Naive thymus-derived CD4-positive, alpha-beta T cell (primary cell): ENCODE measurements at regions of chr5 and their contacts with region 1.

Region 1: DNA sequence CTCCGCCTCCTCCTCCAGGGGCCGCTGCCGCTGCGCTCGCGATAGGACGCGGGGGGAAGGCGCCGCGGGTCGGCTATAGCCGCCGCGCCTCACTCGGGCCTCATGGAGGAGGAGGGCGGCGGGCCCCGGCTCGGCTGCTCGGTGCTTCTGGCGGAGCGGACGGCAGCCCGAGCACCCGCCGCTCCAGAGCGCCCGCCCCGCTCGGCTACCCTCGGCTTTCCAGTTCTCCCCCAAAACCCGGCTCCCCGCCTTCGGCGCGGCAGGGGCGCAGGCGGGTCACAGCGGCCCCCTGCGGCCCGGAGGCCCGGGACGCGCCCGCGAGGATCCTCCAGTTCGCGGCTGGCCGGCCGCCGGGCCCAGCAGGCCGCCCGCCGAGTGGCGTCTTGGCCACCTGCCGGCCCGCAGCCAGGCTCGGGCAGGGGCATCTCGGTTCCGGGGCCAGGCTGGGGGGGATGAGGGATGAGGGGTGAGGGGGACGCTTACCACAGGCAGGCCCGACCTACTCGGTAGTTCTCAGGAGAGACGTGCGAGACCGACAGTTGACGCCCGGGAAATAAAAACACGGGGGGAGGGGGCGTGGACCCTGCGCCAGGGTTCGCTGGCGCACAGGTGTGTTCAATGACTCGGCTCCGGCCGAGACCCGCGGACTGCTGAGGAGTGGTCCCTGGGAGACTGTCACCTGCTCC is at the start of gene PAIP1:
- DNase-seq: peak; percentile 80 to 89 (median 87)
- ATAC-seq: peak; percentile 89
- H3K4me3 ChIP-seq: peak within 1 kb of the TSS; percentile 79
- H3K4me3 Mint-ChIP-seq: peak within 1 kb of the TSS in 7 of 10 donors; percentile 88 to 97 (median 95)
- H3K27ac ChIP-seq: peak within 1 kb of the TSS; percentile 96
- H3K27ac Mint-ChIP-seq: peak within 1 kb of the TSS; percentile 91 to 99 (median 98)
- H3K4me1 ChIP-seq: peaks cover 17 to 30% of the 10 kb centered on the region in 2 donors
- H3K4me1 Mint-ChIP-seq: peaks cover 6 to 17% (median 7%) of the 10 kb centered on the region in 7 donors
- H3K27me3 ChIP-seq: no peaks in the 10 kb centered on the region
- H3K27me3 Mint-ChIP-seq: peaks cover 0 to 18% (median 5%) of the 10 kb centered on the region in 5 donors
- total RNA-seq, gene PAIP1: 20.7 to 41.7 (median 39.2) TPM

Region 2: GRCh38 chr5:43396762-43397304 is 160.2 kb before region 1 on chr5:
- CTCF ChIA-PET with region 1: no interaction called
- POLR2A ChIA-PET with region 1: no interaction called
- intact Hi-C with region 1: loop called (anchors 2 to 5 kb)
- DNase-seq: peak; percentile 42 to 74 (median 66)
- ATAC-seq: peak; percentile 96
- H3K4me3 ChIP-seq: peak overlapping the region; percentile 80
- H3K4me3 Mint-ChIP-seq: peak overlapping the region; percentile 88 to 100 (median 98)
- H3K27ac ChIP-seq: peak overlapping the region; percentile 76
- H3K27ac Mint-ChIP-seq: peak overlapping the region; percentile 93 to 99 (median 97)
- H3K4me1 ChIP-seq: peaks cover 3 to 7% of the 10 kb centered on the region in 2 donors
- H3K4me1 Mint-ChIP-seq: peaks cover 15 to 62% (median 41%) of the 10 kb centered on the region in 7 donors
- H3K27me3 ChIP-seq: no peaks in the 10 kb centered on the region
- H3K27me3 Mint-ChIP-seq: no peaks in the 10 kb centered on the region

Region 3: GRCh38 chr5:43514816-43515677 is 42.0 kb before region 1 on chr5 and contains the start of gene C5orf34:
- CTCF ChIA-PET with region 1: no interaction called
- POLR2A ChIA-PET with region 1: interaction called, 6 read pairs
- intact Hi-C with region 1: loop called (anchors 1 kb)
- DNase-seq: peak; percentile 84 to 94 (median 89)
- ATAC-seq: peak; percentile 97
- H3K4me3 ChIP-seq: peak within 1 kb of the TSS; percentile 84
- H3K4me3 Mint-ChIP-seq: peak within 1 kb of the TSS; percentile 90 to 97 (median 94)
- H3K27ac ChIP-seq: peak within 1 kb of the TSS; percentile 81
- H3K27ac Mint-ChIP-seq: peak within 1 kb of the TSS; percentile 90 to 98 (median 95)
- H3K4me1 ChIP-seq: peaks cover 8 to 14% of the 10 kb centered on the region in 2 donors
- H3K4me1 Mint-ChIP-seq: peaks cover 17 to 42% (median 36%) of the 10 kb centered on the region in 7 donors
- H3K27me3 ChIP-seq: no peaks in the 10 kb centered on the region
- H3K27me3 Mint-ChIP-seq: no peaks in the 10 kb centered on the region
- total RNA-seq, gene C5orf34: 1.1 to 5.2 (median 3.3) TPM

Region 4: DNA sequence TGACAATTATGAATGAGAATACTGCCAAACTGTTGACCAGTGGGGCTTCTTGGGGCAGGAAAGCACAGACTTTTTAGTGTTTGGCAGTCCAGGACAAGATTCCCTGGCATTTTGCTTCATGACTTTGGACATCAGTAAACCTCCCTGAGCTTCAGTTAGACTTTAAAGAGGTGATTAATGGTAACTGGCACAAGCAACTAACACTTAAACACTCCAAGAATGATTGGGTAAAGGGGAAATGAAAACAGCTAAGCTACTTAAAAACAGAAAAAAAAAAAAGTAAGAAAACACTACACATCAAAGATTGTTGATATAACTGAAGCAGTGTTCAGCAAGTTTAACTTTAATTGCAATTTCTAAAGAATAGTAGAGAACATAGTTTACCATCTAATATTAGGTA is 13.6 kb before region 1 on chr5:
- CTCF ChIA-PET with region 1: interaction called, 3 read pairs
- POLR2A ChIA-PET with region 1: interaction called, 5 read pairs
- intact Hi-C with region 1: loop called in 1 of 2 experiments (anchors 1 kb)
- DNase-seq: no peak
- ATAC-seq: no peak
- H3K4me3 ChIP-seq: no peak overlapping the region
- H3K4me3 Mint-ChIP-seq: no peak overlapping the region
- H3K27ac ChIP-seq: no peak overlapping the region
- H3K27ac Mint-ChIP-seq: peak overlapping the region in 2 of 9 donors; percentile 17 to 34
- H3K4me1 ChIP-seq: no peaks in the 10 kb centered on the region
- H3K4me1 Mint-ChIP-seq: peaks cover 7 to 32% (median 16%) of the 10 kb centered on the region in 7 donors
- H3K27me3 ChIP-seq: no peaks in the 10 kb centered on the region
- H3K27me3 Mint-ChIP-seq: no peaks in the 10 kb centered on the region

Region 5: DNA sequence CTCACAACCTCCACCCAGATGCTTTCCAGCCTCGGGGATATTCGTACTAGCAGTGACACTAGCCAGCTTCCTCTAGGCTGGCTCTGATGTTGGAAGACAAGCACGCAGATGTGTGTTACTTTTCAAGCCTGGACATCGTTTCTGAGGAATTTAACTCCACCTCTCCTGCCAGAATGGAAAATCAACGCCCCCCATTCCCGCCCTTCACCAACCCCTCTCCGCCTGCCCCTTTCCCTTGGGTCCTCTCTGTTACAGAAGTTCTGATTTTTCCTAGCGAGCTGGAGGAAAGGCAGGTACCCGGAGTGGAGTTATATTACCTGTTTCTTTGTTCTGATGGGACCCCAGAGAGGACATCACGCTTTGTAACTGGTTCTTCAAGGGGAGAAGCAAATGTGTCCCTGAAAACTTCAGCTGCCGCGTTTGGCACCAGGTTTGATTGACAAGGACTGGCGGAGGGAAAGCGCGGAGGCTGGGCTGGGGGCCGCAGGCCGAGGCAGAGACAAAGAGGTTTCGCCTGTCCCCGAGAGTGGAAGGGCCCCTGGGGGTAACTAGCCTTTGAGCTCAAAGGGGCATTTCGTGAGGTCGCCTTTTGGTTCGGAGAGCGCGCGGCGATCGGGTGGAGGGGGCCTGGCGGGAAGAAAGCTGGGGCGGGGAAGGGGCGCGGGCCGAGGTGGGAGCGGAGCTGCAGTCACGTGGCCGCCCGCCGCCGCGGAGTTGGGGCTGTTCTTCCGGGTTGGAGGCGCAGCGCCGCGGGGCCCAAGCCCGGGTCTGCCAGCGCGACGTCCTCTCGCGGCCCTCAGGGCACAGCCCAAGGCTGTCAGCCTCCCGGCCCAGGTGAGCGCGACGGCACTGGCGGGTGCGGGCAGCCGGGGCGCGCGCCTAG is 45.7 kb after region 1 on chr5 and contains the start of gene NNT:
- CTCF ChIA-PET with region 1: interaction called, 4 read pairs
- POLR2A ChIA-PET with region 1: interaction called, 30 read pairs
- intact Hi-C with region 1: loop called (anchors 1 kb)
- DNase-seq: peak; percentile 71 to 85 (median 78)
- ATAC-seq: peak; percentile 85
- H3K4me3 ChIP-seq: peak within 1 kb of the TSS; percentile 78
- H3K4me3 Mint-ChIP-seq: peak within 1 kb of the TSS; percentile 90 to 99 (median 94)
- H3K27ac ChIP-seq: peak within 1 kb of the TSS; percentile 87
- H3K27ac Mint-ChIP-seq: peak within 1 kb of the TSS; percentile 86 to 98 (median 93)
- H3K4me1 ChIP-seq: peaks cover 6 to 14% of the 10 kb centered on the region in 2 donors
- H3K4me1 Mint-ChIP-seq: peaks cover 26 to 72% (median 60%) of the 10 kb centered on the region in 7 donors
- H3K27me3 ChIP-seq: no peaks in the 10 kb centered on the region
- H3K27me3 Mint-ChIP-seq: no peaks in the 10 kb centered on the region
- total RNA-seq, gene NNT: 42.5 to 73.5 (median 60.7) TPM

Region 6: DNA sequence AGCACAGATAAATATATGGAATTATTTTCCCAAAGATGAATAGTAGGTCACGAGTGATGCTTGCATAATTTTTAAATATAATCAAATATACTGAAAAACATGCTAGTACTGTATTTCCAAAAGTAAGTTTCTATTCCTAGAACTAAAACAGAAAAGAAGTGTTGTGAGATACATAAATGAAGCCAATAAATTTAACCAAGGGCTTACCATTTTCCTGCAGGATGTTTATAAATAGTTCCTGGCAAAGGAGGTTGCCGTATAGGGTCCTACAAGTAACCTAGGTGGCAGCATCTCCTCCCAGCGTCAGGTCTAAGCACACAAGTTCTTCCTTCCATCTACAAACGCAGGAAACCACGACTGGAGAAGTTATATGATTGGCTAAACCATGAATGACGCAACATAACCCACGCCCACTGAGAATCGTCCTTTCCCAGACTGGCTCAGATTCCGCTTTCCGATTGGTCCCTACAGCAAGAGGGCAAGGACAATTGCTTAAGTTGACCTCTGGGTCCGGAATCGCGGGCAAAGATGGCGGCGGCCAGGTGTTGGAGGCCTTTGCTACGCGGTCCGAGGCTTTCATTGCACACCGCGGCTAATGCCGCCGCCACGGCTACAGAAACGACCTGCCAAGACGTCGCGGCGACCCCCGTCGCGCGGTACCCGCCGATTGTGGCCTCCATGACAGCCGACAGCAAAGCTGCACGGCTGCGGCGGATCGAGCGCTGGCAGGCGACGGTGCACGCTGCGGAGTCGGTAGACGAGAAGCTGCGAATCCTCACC is 1251.6 kb after region 1 on chr5 and contains the start of gene MRPS30:
- CTCF ChIA-PET with region 1: no interaction called
- POLR2A ChIA-PET with region 1: no interaction called
- intact Hi-C with region 1: loop called (anchors 1 kb)
- DNase-seq: peak; percentile 65 to 96 (median 94)
- ATAC-seq: peak; percentile 98
- H3K4me3 ChIP-seq: peak within 1 kb of the TSS; percentile 85
- H3K4me3 Mint-ChIP-seq: peak within 1 kb of the TSS; percentile 86 to 98 (median 96)
- H3K27ac ChIP-seq: peak within 1 kb of the TSS; percentile 81
- H3K27ac Mint-ChIP-seq: peak within 1 kb of the TSS; percentile 84 to 98 (median 95)
- H3K4me1 ChIP-seq: peaks cover 0 to 20% of the 10 kb centered on the region in 2 donors
- H3K4me1 Mint-ChIP-seq: peaks cover 12 to 53% (median 36%) of the 10 kb centered on the region in 7 donors
- H3K27me3 ChIP-seq: no peaks in the 10 kb centered on the region
- H3K27me3 Mint-ChIP-seq: peaks cover 0 to 5% (median 3%) of the 10 kb centered on the region in 5 donors
- total RNA-seq, gene MRPS30: 31.1 to 61.0 (median 47.1) TPM